ENCODE measurements at regions of chr9 and their contacts with region 1.

Region 1: DNA sequence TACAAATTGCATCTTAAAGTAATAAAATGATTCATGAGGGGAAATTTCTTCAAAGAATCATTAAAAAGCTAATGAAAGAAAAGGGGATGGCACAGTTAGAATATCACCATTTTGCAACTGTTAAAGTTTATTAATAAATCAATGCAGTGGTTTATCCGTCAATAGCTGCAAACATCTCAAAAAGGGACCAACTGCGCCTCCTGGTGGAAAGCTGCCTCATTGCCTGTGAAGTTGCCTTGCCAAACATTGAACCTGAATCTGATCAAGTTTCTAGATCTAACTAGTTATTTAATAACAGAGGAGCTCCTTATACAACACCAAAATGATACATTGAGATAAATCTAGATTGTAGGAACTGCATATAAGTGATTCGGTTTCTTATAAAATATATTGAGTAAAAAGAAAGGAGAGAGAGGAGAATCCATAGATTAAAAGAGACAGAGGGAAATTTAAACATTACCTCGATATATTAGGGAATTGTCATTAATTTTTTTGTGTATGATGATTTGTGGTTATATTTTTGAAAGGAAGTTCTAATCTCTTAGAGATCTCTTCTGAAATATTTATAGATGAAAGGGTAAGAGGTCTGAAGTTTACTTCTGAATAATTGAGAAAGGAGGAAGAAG is 6.9 kb upstream of the NDUFB6 start:
- H3K4me3 ChIP-seq: no peak overlapping the region
- H3K27ac ChIP-seq: no peak overlapping the region
- H3K4me1 ChIP-seq: no peaks in the 10 kb centered on the region; the same call in 1 of the 2 replicates
- CTCF ChIP-seq: no peak

Region 2: GRCh38 chr9:32384364-32385151 is 195.3 kb before region 1 on chr9 and contains the start of gene ACO1:
- CTCF ChIA-PET with region 1: interaction called, 583 read pairs
- POLR2A ChIA-PET with region 1: interaction called, 9 read pairs
- H3K4me3 ChIP-seq: peak within 1 kb of the TSS; percentile 92
- H3K27ac ChIP-seq: peak within 1 kb of the TSS; percentile 41; the same call in 1 of the 2 replicates
- H3K4me1 ChIP-seq: no peaks in the 10 kb centered on the region
- CTCF ChIP-seq: no peak

Region 3: GRCh38 chr9:32508728-32509127 is 71.1 kb before region 1 on chr9:
- CTCF ChIA-PET with region 1: interaction called, 12 read pairs
- POLR2A ChIA-PET with region 1: no interaction called
- H3K4me3 ChIP-seq: no peak overlapping the region
- H3K27ac ChIP-seq: no peak overlapping the region
- H3K4me1 ChIP-seq: no peaks in the 10 kb centered on the region
- CTCF ChIP-seq: no peak

Region 4: DNA sequence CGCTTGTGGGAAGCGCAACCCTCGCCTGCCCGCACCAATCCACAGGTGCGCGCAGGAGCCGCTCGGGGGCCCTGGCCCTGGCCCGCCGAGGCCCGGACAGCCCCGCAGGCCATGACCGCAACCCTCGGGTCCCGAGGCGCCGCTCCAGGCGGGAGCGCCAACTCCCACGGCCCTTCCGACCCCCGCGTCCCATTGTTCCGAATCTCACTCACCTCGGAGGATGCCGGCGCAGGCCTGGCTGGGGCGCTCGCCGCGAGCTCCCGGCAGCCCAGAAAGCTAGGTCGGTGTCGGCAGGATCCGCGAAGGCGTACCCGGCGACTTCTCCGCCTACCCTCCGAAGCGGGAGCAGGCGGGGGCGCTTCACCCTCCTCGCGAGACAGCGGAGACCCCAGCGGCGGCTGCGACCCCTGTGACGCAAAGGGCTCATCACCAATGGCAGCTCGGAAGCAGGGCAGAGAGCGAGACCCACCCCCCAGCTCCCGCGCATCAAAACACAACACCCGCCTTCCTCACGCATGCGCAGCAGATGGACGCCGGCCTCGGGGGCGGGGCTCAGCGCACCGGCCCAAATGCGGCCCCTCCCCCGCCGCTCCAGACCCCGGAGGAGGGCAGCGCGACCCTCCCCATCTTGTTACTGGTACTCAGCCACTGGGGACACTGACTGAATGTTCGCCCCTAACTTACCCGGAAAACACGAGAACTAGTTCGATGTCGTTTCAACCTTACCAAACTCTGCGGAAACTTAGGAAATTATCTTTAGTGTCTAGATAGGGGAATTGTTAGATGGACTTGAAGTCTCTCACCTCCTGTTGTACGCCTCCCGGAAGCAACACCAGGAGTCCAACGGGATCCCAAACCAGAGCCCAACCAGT is 29.0 kb before region 1 on chr9:
- CTCF ChIA-PET with region 1: interaction called, 44 read pairs
- POLR2A ChIA-PET with region 1: no interaction called
- H3K4me3 ChIP-seq: peak overlapping the region; percentile 84
- H3K27ac ChIP-seq: peak overlapping the region; percentile 91
- H3K4me1 ChIP-seq: 0 out of 2 replicates have a peak, but pooled peaks cover 4% of the 10 kb centered on the region
- CTCF ChIP-seq: peak; percentile 65; the same call in 1 of the 2 replicates

Region 5: DNA sequence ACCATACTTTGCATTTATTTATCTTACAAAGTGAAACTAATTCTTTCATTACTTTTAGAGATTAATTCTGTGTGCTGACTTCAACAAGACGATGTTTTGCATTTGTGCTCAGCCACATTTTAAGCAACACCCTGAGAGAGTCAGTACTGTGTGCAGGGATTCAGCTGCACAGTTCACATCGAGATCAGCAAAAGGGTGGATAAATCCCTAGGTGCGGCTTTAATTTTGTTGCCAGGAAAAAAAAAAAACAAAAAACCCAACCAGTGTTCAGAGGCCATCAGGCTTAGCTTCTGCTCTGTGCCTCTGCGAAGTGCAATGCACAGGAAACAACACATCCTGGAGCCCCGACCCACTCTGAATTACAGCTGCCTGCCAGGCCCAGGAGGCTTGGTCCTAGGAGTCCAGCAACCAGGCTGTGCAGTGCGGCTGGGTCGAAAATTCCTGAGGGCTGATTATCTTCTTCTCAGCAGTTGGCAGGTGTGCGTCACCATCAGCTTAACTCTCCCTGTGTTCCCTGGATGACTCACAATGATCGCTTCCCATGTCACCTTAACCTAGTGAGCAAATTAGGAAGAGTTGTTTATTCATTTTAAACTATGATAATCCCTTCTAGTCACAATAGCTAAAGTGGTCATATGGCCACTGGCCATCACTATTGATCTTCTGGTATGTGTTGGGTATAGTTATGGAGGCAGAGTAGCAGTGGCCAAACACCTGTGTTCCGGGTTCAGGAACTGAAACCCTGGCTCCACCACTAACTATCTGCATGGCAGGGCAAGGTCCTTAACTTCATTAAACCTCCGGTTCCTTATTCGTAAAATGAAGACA is 24.3 kb after region 1 on chr9:
- CTCF ChIA-PET with region 1: interaction called, 12 read pairs
- POLR2A ChIA-PET with region 1: no interaction called
- H3K4me3 ChIP-seq: no peak overlapping the region
- H3K27ac ChIP-seq: no peak overlapping the region
- H3K4me1 ChIP-seq: no peaks in the 10 kb centered on the region
- CTCF ChIP-seq: no peak

Measured in HEK293 (cell line).